ENCODE measurements at regions of chr5 and their contacts with region 1.

Region 1: DNA sequence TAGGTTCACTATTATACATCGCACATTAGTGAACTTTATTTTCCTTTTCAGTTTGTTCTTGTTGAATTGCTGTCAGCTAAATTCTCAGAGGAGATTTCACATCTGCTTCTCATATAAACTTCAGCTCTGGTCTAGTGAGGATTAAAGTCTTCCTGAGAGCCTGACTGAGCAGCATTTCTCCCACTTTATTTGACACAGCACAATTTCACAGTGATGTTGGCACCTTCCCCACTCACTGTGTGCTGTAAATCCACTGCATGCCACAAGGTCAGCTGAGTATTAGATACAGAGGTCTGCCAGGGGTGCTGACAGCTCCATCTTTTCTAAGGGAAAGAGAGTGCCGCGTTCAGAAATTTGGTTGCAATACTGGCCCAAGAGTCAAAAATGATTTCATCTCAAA is 567.4 kb downstream of the PRR16 start:
- DNase-seq: no peak

Region 2: GRCh38 chr5:120988941-120989340 is 42.5 kb before region 1 on chr5:
- intact Hi-C with region 1: no loop called
- DNase-seq: no peak

Region 3: GRCh38 chr5:121109817-121110216 is 78.3 kb after region 1 on chr5:
- intact Hi-C with region 1: loop called in 1 of 2 experiments (anchors 2 kb)
- DNase-seq: no peak